Sigmoid colon (tissue), 7 donors: ENCODE measurements at regions of chr12 and their contacts with region 1.

Region 1: GRCh38 chr12:103965590-103966504 is at the start of gene TDG:
- DNase-seq: peak; percentile 99
- H3K4me3 ChIP-seq: peak within 1 kb of the TSS; percentile 67 to 83 (median 73)
- H3K27ac ChIP-seq: peak within 1 kb of the TSS; percentile 92 to 97 (median 94)
- H3K4me1 ChIP-seq: peaks cover 0 to 59% (median 48%) of the 10 kb centered on the region in 4 donors
- H3K27me3 ChIP-seq: no peaks in the 10 kb centered on the region
- CTCF ChIP-seq: no peak
- EP300 ChIP-seq: peak in 1 of 4 donors; percentile 75
- POLR2A ChIP-seq: peak; percentile 83 to 89
- total RNA-seq, gene TDG: 12.8 to 24.1 (median 21.9) TPM

Region 2: DNA sequence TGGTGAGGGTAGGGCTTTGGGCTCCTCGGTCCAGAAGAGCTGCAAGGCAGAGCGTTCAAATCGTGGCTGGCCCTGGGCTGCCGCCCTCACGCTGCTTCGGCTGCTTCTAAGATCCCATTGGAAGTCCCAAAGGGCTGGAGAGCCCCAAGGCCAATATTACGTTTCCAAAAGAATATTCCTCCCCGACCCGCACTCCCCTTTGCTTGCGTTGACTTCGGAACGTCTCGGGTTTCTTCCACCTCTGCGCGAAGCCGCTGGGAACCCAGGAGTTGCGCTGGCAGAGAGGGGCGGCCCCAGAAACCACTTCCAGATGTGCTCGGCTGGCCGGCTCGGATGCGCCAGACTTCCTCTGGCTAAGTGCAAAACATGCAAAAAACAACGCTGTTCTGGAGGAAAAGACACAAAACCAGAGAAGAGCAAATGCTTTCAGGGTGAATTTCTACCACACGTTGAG is 84.1 kb after region 1 on chr12 and contains the start of gene GLT8D2:
- intact Hi-C with region 1: loop called (anchors 5 kb)
- DNase-seq: peak; percentile 88
- H3K4me3 ChIP-seq: peak within 1 kb of the TSS; percentile 31 to 55 (median 54)
- H3K27ac ChIP-seq: peak within 1 kb of the TSS; percentile 80 to 86 (median 83)
- H3K4me1 ChIP-seq: peaks cover 0 to 52% (median 45%) of the 10 kb centered on the region in 4 donors
- H3K27me3 ChIP-seq: no peaks in the 10 kb centered on the region
- CTCF ChIP-seq: no peak
- EP300 ChIP-seq: no peak
- POLR2A ChIP-seq: no peak
- total RNA-seq, gene GLT8D2: 12.5 to 53.2 (median 17.7) TPM

Region 3: GRCh38 chr12:104064031-104064822 is 98.4 kb after region 1 on chr12 and contains the start of gene HCFC2:
- intact Hi-C with region 1: loop called (anchors 2 kb)
- DNase-seq: peak; percentile 96
- H3K4me3 ChIP-seq: peak within 1 kb of the TSS; percentile 79 to 94 (median 88)
- H3K27ac ChIP-seq: peak within 1 kb of the TSS; percentile 88 to 96 (median 92)
- H3K4me1 ChIP-seq: peaks cover 0 to 55% (median 40%) of the 10 kb centered on the region in 4 donors
- H3K27me3 ChIP-seq: no peaks in the 10 kb centered on the region
- CTCF ChIP-seq: no peak
- EP300 ChIP-seq: peak in 1 of 4 donors; percentile 47
- POLR2A ChIP-seq: peak; percentile 64 to 78
- total RNA-seq, gene HCFC2: 35.7 to 53.6 (median 47.1) TPM